Right ventricle myocardium inferior (tissue), 1 donor: ENCODE measurements at regions of chr10 and their contacts with region 1.

Region 1: DNA sequence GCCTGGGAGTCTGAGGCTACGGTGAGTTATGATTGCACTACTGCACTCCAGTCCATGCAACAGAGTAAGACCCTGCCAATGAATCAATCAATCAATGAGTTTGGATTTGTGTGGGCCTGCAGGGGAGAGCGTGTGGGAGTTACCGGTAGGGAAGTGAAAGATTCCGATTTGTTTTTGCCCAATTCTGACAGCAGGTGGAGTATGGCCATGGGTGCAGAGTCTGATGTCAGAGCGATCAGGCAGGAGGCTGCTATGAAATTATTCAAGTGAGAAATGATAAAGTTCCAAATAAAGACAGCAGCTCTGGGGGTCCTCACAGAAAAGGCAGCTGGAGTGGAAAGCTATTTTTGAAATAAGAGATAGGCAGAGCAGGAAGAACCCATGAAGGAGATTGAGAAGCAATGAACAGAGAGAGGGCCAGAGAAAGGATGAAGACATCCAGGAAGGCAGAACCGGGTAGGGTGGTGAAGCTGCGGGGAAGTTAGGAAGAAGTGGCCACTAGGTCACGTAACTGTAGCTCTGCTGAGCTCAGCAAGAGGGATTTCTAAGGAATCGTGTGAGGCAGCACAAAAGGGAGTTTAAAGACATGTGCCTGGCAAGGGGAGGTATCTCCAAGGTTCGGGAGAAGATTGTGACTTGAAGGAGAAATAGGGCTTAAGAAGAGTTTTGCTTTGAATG is 93.7 kb upstream of the NMT2 start:
- DNase-seq: no peak
- ATAC-seq: peak; percentile 61

Region 2: DNA sequence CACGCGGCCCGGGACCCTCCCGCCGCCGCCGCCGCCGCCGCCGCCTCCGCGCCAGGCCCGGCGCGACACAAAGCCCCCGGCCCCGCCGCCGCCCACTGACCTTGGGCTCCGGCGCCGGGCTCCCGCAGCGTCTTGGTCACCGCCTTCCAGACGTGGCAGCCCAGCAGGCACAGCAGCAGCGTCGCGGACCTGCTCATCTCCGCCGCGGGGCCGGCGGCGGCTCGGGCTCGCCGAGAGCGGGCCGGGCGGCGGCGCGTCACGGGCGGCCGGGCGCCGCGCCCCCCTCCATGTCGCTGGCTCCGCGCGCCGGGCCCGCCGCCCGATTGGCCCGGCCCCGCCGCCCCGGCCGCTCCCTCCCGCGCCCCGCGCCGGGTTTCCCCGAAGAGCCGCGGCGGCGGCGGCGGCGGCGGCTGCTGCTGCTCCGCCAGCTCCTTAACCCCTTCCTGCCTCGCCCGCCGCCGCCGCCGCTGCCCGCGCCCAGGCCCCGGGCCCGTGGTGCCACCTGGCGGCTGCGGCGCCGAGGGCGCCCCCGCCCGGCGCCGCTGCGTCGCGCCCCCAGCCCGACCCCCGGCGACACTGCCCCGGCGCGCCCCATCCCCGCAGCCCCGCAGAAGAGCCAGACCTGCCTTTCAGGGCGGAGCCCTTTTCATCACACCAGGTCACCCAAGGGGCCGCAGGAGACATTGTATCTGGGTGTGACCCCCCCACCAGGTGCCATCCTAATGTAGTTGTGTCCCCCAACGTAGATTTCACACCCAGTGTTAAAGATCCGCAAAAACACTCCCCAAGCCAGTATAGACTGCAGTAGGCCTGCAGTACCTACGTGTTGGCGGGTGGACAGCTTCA is 108.9 kb after region 1 on chr10 and contains the start of gene FAM171A1:
- intact Hi-C with region 1: loop called (anchors 2 kb)
- DNase-seq: peak; percentile 77
- ATAC-seq: peak; percentile 85
- total RNA-seq, gene FAM171A1: 12.2 TPM